ENCODE measurements at regions of chr22 and their contacts with region 1.

Region 1: DNA sequence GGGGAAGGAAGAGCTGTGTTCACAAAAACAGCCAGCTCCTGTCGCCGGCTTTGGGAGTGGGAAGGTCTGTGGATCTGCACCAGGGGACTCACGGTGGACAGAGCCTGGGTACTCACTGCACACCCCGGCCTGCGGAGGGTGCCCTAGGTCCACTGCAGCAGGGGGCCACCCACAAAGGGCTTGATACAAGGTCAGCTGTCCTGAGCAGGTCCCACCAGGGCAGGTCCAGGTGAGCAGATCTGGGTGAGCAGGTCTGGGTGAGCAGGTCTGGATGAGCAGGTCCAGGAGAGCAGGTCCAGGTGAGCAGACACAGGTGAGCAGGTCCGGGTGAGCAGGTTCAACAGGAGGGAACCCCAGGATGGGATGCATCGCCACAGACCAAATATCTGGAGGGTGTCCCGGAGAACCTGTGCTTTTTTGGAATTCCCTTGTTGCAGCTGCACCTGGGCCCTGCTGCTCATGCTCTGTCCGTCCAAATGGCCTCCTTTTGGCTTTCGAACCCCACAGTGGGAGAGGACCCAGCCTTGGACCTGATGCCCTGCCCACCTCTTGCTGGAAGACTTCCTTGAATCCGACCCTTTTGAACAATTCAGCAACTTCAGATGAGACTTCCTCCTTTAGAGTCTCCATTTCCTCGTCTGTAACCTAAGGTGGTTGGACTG is 485.3 kb downstream of the TBC1D22A start:
- DNase-seq: no peak
- H3K4me3 Mint-ChIP-seq: no peak overlapping the region
- H3K27ac Mint-ChIP-seq: no peak overlapping the region
- H3K4me1 Mint-ChIP-seq: no peaks in the 10 kb centered on the region
- H3K27me3 Mint-ChIP-seq: peaks cover 74% of the 10 kb centered on the region
- CTCF ChIP-seq: no peak

Region 2: GRCh38 chr22:46965555-46966494 is 281.9 kb before region 1 on chr22:
- CTCF ChIA-PET with region 1: no interaction called
- intact Hi-C with region 1: no loop called
- DNase-seq: no peak
- H3K4me3 Mint-ChIP-seq: no peak overlapping the region
- H3K27ac Mint-ChIP-seq: no peak overlapping the region
- H3K4me1 Mint-ChIP-seq: no peaks in the 10 kb centered on the region
- H3K27me3 Mint-ChIP-seq: no peaks in the 10 kb centered on the region
- CTCF ChIP-seq: no peak

Region 3: DNA sequence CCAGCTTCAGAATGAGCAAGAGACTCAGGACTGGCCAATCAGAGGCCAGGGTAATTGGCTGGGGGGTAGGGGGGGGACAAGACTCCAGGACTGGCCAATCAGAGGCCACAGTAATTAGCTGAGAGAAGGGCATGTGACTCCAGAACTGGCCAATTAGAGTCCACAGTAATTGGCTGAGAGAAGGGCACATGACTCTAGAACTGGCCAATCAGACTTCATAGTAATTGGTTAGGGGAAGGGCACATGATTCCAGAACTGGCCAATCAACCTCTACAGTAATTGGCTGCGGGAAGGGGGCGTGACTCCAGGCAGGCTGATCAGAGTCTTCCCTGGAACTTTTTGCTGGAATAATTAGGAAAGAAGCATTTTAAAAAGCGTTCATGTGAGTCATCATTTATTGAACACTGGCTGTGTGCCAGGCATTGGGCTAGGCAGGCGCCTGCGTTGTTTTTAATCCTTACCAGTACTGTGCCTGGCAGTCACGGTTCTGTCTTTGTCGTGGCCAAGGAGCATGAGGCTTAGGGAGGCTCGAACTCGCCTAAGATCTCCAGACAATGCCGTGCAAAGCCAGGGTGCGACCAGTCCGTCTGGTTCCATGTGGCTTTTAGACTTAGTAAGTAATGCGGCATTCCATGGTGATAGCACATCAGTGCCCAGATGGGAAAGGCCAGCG is 22.9 kb after region 1 on chr22:
- CTCF ChIA-PET with region 1: no interaction called
- intact Hi-C with region 1: loop called (anchors 1 kb)
- DNase-seq: peak; percentile 56
- H3K4me3 Mint-ChIP-seq: no peak overlapping the region
- H3K27ac Mint-ChIP-seq: no peak overlapping the region
- H3K4me1 Mint-ChIP-seq: no peaks in the 10 kb centered on the region
- H3K27me3 Mint-ChIP-seq: peaks cover 19% of the 10 kb centered on the region
- CTCF ChIP-seq: no peak

Region 4: GRCh38 chr22:47474464-47474863 is 226.8 kb after region 1 on chr22:
- CTCF ChIA-PET with region 1: no interaction called
- intact Hi-C with region 1: loop called (anchors 10 kb)
- DNase-seq: no peak
- H3K4me3 Mint-ChIP-seq: no peak overlapping the region
- H3K27ac Mint-ChIP-seq: no peak overlapping the region
- H3K4me1 Mint-ChIP-seq: no peaks in the 10 kb centered on the region
- H3K27me3 Mint-ChIP-seq: no peaks in the 10 kb centered on the region
- CTCF ChIP-seq: no peak

Measured in Calu3 (cell line).